Uterus (tissue), 4 donors: ENCODE measurements at regions of chr10 and their contacts with region 1.

Region 1: GRCh38 chr10:129030996-129031843 is 435.8 kb upstream of the MGMT start:
- DNase-seq: peak; percentile 40 to 65
- H3K4me3 ChIP-seq: no peak overlapping the region
- H3K27ac ChIP-seq: no peak overlapping the region
- H3K4me1 ChIP-seq: no peaks in the 10 kb centered on the region
- H3K27me3 ChIP-seq: peaks cover 0 to 9% of the 10 kb centered on the region in 2 donors
- CTCF ChIP-seq: peak; percentile 90 to 94 (median 92)
- POLR2A ChIP-seq: no peak

Region 2: DNA sequence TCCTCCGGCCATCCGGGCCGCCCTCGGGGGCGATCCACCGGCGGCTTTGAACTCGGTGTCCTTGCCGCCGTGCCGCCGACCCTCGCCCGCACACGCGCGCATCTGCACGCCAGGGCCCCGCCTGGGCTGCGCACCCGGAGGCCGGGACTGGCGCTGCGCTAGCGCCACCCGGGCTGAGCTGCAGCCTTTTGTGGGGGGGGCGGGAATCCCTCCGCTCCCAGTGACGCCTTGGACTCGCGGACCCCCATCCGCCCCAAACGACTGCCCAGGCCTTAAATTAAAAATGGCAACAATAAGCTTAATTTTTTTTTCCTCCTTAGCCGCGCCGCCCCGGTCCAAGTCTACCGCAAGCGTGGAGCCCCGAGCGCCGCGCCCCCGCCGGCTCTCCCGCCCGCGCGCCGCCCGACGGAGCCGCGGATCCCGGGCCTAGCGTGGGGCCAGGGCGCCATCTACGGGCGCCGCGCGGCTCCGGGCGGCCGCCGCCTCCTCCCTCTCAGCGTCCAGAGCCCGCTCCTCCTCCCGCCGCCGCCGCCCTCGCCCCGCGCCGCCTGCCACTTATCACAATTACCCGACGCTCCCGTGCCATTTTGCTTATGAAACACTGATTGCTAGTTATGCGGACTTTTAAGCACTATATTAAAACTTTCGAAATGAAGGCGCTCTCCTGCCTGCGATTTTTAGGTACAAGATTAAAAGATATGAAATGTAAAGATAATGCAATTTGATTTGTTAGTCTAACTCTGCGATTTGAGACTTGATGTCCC is 940.3 kb after region 1 on chr10:
- intact Hi-C with region 1: loop called (anchors 5 kb)
- DNase-seq: peak in 1 of 2 donors; percentile 60
- H3K4me3 ChIP-seq: peak overlapping the region in 1 of 2 donors; percentile 19
- H3K27ac ChIP-seq: no peak overlapping the region
- H3K4me1 ChIP-seq: peaks cover 0 to 8% of the 10 kb centered on the region in 2 donors
- H3K27me3 ChIP-seq: peaks cover 35 to 45% of the 10 kb centered on the region in 2 donors
- CTCF ChIP-seq: peak; percentile 28 to 82 (median 76)
- POLR2A ChIP-seq: no peak